Heart left ventricle (tissue), 16 donors: ENCODE measurements at regions of chr21 and their contacts with region 1.

Region 1: GRCh38 chr21:33244082-33244778 is 14.5 kb downstream of the IFNAR2 start:
- DNase-seq: no peak
- ATAC-seq: peak; percentile 68 to 84 (median 80)
- H3K4me3 ChIP-seq: peak overlapping the region in 1 of 12 donors; percentile 5
- H3K27ac ChIP-seq: peak overlapping the region in 10 of 12 donors; percentile 0 to 77 (median 45)
- H3K4me1 ChIP-seq: peaks cover 0 to 79% (median 19%) of the 10 kb centered on the region in 12 donors
- H3K27me3 ChIP-seq: no peaks in the 10 kb centered on the region
- CTCF ChIP-seq: no peak
- POLR2A ChIP-seq: no peak

Region 2: DNA sequence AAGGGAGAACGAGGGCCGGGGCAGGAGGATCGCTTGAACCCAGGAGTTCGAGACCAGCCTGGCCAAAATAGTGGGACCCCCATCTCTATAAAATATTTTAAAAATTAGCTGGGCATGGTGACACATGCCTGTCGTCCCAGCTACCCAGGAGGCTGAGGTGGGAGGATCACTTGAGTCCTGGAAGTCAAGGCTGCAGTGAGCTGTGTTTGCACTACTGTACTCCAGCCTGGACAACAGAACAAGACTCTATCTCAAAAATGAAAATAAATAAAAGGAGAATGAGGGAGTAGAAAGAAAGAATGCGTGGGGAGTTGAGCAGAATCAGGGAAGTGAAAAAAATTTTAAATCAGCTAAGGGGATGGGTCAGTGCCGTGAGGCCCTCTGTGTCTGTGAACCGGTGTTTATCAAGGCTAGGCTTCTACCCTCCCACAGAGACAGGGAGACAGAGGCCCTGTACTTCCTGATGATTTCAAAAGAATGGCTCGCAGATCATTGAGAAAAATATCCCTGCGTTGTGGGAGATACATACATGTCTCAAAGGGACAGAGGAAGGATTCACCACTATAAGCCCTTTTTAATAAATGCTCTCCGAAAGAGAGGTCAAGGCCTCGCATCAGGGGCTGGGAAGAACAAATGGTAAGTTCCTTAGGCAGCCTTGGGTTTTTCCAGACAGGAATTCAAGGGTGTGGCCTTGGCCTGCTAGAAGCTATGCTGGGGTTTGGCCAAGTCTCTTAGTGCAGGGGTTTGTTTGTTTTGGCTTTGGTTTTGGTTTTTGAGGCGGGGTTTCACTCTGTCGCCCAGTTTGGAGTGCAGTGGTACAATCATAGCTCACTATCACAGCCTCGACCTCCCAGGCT is 42.6 kb after region 1 on chr21:
- intact Hi-C with region 1: loop called in 2 of 10 experiments (anchors 5 to 10 kb)
- DNase-seq: peak in 4 of 5 donors; percentile 62 to 81 (median 66)
- ATAC-seq: peak; percentile 47 to 90 (median 80)
- H3K4me3 ChIP-seq: peak overlapping the region in 1 of 12 donors; percentile 16
- H3K27ac ChIP-seq: peak overlapping the region; percentile 26 to 86 (median 70)
- H3K4me1 ChIP-seq: peaks cover 0 to 44% (median 26%) of the 10 kb centered on the region in 12 donors
- H3K27me3 ChIP-seq: no peaks in the 10 kb centered on the region
- CTCF ChIP-seq: no peak
- POLR2A ChIP-seq: no peak